HCT116 (cell line): ENCODE measurements at regions of chr13 and their contacts with region 1.

Region 1: DNA sequence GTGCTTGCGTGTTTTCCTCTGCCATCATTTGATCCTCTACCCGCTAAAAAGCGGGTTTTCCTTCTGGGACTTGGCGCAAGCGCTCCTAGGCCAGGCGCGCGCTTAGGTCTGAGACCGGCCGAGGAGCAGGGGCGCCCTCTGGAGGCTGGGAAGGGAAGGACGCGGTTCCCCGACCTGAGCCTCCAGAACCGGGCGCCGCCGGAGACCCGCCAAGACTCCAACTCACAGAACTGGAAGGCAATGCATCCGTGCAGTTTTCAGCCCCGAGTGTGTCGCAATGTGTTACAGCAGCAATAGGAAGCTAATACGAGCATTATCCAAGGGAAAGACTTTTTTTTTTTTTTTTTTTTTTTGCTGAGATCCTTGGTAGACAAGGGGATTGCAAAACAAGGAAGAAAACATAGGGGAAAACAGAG is 190.9 kb downstream of the COL4A1 start:
- DNase-seq: peak; percentile 51
- ATAC-seq: peak; percentile 97
- H3K4me3 ChIP-seq: no peak overlapping the region
- H3K27ac ChIP-seq: no peak overlapping the region
- H3K4me1 ChIP-seq: peaks cover 0 to 4% of the 10 kb centered on the region in 2 experiments; a peak in 1 of 4 replicates
- H3K27me3 ChIP-seq: no peaks in the 10 kb centered on the region
- CTCF ChIP-seq: peak; percentile 65 to 92 (median 91); a peak in 5 of 6 replicates
- POLR2A ChIP-seq: no peak
- RAD21 ChIP-seq: peak; percentile 85

Region 2: DNA sequence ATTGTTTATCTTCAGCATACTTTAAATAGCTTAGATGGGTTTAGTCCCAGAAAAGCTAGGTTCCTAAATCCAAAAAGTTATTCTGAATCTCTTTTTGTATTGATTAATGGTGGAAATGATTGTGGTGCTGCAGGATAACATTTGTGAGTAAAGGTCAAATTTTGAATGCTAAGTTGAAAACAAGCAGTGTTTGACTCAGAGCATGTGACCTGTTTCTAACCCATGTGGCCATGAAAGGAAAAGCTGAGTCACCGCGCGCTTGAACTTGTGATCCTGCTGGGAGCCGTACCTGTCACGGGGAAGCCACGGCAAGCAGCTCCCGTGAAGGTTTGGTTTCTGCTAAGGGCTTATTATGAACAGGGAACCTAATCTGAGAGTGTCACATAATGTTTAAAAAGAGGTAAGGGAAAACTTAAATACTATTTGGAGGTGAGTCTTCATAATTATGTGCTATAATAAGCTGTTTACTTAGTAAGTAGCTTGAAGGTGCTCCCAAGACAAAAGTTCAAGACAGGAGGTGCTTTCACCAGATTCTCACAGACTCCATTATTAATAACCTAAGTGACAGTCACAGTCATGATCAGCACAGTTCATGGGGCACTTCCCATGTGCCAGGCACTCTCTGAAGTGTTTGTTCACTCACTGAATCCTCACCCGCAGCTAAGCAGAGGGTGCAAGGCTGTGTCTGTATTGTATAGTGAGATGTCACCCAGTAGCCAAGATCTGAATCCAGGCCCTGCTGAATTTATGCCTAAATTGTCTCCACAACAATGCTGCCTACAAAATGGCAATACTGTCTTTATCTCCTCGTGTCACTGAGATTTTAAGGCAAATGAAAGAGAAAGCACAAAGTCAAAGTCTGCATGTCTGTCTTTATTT is 1200.2 kb before region 1 on chr13:
- CTCF ChIA-PET with region 1: no interaction called
- POLR2A ChIA-PET with region 1: no interaction called
- RAD21 ChIA-PET with region 1: no interaction called
- intact Hi-C with region 1: loop called (anchors 1 kb)
- DNase-seq: peak; percentile 91
- ATAC-seq: peak; percentile 88
- H3K4me3 ChIP-seq: peak overlapping the region in 1 of 2 experiments; percentile 30; a peak in 2 of 4 replicates
- H3K27ac ChIP-seq: peak overlapping the region; percentile 67; the same call in 1 of the 2 replicates
- H3K4me1 ChIP-seq: peaks cover 25 to 41% of the 10 kb centered on the region in 2 experiments
- H3K27me3 ChIP-seq: no peaks in the 10 kb centered on the region
- CTCF ChIP-seq: no peak
- POLR2A ChIP-seq: no peak
- RAD21 ChIP-seq: no peak

Region 3: GRCh38 chr13:109938255-109938936 is 177.7 kb before region 1 on chr13:
- CTCF ChIA-PET with region 1: no interaction called
- POLR2A ChIA-PET with region 1: no interaction called
- RAD21 ChIA-PET with region 1: no interaction called
- intact Hi-C with region 1: loop called (anchors 10 kb)
- DNase-seq: no peak
- ATAC-seq: no peak
- H3K4me3 ChIP-seq: no peak overlapping the region
- H3K27ac ChIP-seq: no peak overlapping the region
- H3K4me1 ChIP-seq: no peaks in the 10 kb centered on the region
- H3K27me3 ChIP-seq: no peaks in the 10 kb centered on the region
- CTCF ChIP-seq: no peak
- POLR2A ChIP-seq: no peak
- RAD21 ChIP-seq: no peak